Transverse colon (tissue), 4 donors: ENCODE measurements at regions of chr14 and their contacts with region 1.

Region 1: DNA sequence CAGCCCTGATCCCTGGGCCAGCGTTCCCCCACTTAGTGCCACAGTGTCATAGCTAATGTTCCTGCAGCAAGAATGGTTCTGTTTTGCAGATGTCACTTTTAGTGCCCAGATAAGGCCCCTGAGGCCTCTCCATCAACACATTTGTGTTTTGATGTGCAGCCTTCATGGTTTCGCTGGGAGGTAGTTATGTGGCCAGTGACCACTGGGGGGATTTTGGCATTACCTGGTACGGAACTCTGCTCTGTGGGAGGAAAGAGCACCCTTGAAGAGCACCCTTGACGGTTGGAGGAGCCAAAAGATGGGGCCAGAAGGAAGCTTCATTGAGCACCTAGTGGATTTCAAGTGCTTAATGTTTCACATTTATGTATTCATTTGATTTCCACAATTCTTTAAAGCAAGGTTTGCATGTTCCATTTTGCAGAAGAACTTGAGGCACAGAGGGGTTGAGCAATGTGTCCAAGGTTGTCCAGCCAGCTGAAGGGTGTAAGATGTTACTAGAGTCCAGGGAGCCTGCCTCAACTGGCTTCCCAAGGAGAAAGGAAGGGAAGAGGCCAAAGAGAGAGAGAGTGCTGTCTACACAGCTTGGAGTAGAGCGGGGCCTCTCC is 13.0 kb downstream of the SERPINA11 start:
- DNase-seq: no peak
- H3K4me3 ChIP-seq: no peak overlapping the region
- H3K27ac ChIP-seq: no peak overlapping the region
- H3K4me1 ChIP-seq: no peaks in the 10 kb centered on the region
- H3K27me3 ChIP-seq: peaks cover 29% of the 10 kb centered on the region
- CTCF ChIP-seq: no peak
- EP300 ChIP-seq: no peak
- POLR2A ChIP-seq: no peak

Region 2: DNA sequence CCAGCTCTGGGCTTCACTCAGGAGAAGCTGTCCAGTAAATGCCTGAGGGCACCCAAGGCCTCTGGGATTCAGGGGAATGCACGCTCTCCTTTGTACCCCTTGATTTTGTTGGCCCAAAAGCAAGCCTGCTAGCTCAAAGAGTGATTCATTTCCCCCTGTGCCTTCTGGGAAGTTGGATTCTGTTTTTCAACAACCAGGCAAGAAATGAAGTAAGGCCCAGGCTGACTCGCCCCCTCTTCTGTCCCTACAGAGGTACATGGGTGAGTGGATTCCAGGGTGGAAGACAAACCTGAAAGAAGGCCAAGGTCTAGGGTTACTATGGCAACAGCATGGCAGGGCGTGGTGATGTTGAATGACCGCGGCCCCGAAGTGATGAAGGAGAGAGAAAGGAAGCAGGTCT is 132.4 kb after region 1 on chr14:
- in situ Hi-C with region 1: no loop called
- intact Hi-C with region 1: no loop called
- DNase-seq: no peak
- H3K4me3 ChIP-seq: no peak overlapping the region
- H3K27ac ChIP-seq: peak overlapping the region in 3 of 4 donors; percentile 31 to 62 (median 33)
- H3K4me1 ChIP-seq: peaks cover 0 to 2% (median 0%) of the 10 kb centered on the region in 4 donors
- H3K27me3 ChIP-seq: no peaks in the 10 kb centered on the region
- CTCF ChIP-seq: no peak
- EP300 ChIP-seq: no peak
- POLR2A ChIP-seq: no peak

Region 3: GRCh38 chr14:95796788-95797187 is 1357.2 kb after region 1 on chr14:
- in situ Hi-C with region 1: no loop called
- intact Hi-C with region 1: loop called (anchors 5 kb)
- DNase-seq: no peak
- H3K4me3 ChIP-seq: no peak overlapping the region
- H3K27ac ChIP-seq: no peak overlapping the region
- H3K4me1 ChIP-seq: no peaks in the 10 kb centered on the region
- H3K27me3 ChIP-seq: no peaks in the 10 kb centered on the region
- CTCF ChIP-seq: no peak
- EP300 ChIP-seq: no peak
- POLR2A ChIP-seq: no peak